Natural killer cell (primary cell): ENCODE measurements at regions of chr9 and their contacts with region 1.

Region 1: DNA sequence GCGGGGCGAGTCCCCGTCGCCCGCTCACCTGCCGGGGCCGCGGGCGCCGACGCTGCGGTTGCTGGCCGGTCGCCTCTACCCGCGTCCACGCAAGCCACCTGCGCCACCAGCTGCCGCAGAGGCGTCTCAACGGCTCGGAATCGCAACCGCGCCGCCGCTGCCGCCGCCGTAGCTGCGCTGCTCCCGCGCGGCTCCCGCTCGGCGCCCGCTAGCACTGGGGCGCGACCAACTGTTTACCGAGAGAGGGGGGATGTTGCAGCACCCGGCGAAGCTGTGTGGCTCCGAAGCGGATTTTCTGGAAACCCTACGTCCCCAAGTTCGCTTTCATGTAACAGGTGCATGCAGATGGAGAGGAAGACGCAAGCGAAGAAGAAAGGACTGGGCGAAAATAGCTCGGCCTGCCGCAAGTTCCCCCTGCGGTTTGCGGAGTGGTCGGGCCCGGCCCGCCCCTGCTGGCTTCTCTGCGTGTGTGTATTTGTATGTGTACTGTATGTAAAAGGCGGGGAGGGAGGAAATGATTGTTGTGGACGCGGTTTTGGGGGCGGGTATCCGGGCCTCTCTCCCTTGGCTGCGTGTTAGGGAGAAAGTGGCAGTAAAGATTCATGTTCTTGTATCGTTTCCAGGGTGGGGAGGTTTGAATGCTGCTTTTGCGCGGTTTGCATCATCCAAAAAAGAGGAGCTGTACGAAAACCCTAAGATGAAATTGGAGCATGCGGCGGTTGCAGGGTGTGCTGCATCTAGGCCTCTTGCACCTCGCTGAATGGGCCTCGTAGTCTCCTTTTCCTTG is at the start of gene PSIP1:
- DNase-seq: peak; percentile 87 to 93
- ATAC-seq: peak; percentile 81 to 92 (median 83)
- H3K4me3 ChIP-seq: peak within 1 kb of the TSS; percentile 92
- H3K4me3 Mint-ChIP-seq: peak within 1 kb of the TSS; percentile 98
- H3K27ac ChIP-seq: peak within 1 kb of the TSS; percentile 97
- H3K27ac Mint-ChIP-seq: peak within 1 kb of the TSS; percentile 98
- H3K4me1 ChIP-seq: peaks cover 7% of the 10 kb centered on the region
- H3K4me1 Mint-ChIP-seq: peaks cover 41% of the 10 kb centered on the region in 2 donors
- H3K27me3 ChIP-seq: no peaks in the 10 kb centered on the region
- H3K27me3 Mint-ChIP-seq: no peaks in the 10 kb centered on the region
- CTCF ChIP-seq: no peak
- total RNA-seq, gene PSIP1: 50.3 to 83.1 (median 72.6) TPM

Region 2: DNA sequence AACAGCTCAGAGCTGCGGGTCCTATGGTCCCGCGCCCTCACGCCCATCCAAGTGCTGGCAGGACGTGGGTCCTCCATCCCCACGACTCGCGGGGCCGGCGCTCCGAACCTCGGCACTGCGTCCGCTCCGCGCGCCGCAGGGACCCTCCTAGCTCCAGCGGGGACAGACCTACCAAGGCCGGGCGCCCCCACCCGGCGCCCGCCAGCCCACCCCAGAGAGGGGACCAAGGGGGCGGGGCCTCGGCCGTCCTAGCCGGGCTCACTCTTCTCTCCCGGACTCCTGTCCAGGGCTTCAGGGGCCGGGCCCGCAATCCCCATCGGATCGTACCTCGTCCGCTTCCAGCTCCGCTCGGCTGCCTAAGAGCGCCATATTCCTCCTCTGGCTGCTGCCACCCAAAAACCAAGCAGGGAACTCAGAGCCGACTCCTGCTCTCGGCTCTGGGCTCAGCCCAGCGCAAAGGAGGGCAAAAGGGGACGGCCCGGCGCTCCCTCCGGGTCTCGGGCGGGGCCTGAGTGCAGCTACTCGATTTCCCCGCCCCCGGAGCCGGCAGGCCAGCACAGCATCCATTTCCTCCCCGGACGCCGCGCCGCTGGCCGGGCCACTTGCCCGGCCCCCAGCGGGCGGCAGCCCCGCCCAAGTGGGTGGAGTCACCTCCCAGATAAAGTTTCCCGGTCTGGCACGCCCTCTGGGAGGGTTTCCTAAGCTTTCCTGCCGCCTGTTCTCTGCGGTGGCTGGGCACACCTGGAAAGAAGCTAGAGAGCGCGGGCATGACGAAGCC is 204.0 kb before region 1 on chr9 and contains the start of gene TTC39B:
- intact Hi-C with region 1: loop called (anchors 2 kb)
- DNase-seq: peak; percentile 81 to 87
- ATAC-seq: peak; percentile 89 to 96 (median 91)
- H3K4me3 ChIP-seq: peak within 1 kb of the TSS; percentile 98
- H3K4me3 Mint-ChIP-seq: peak within 1 kb of the TSS; percentile 97
- H3K27ac ChIP-seq: peak within 1 kb of the TSS; percentile 79
- H3K27ac Mint-ChIP-seq: peak within 1 kb of the TSS; percentile 85 to 95
- H3K4me1 ChIP-seq: peaks cover 16% of the 10 kb centered on the region
- H3K4me1 Mint-ChIP-seq: peaks cover 48 to 50% of the 10 kb centered on the region in 2 donors
- H3K27me3 ChIP-seq: no peaks in the 10 kb centered on the region
- H3K27me3 Mint-ChIP-seq: no peaks in the 10 kb centered on the region
- CTCF ChIP-seq: no peak
- total RNA-seq, gene TTC39B: 51.2 to 65.1 (median 54.2) TPM

Region 3: GRCh38 chr9:15422372-15423230 is 88.4 kb before region 1 on chr9 and contains the start of gene SNAPC3:
- intact Hi-C with region 1: loop called (anchors 1 kb)
- DNase-seq: peak; percentile 86 to 95
- ATAC-seq: peak; percentile 97 to 100 (median 98)
- H3K4me3 ChIP-seq: peak within 1 kb of the TSS; percentile 89
- H3K4me3 Mint-ChIP-seq: peak within 1 kb of the TSS; percentile 90
- H3K27ac ChIP-seq: peak within 1 kb of the TSS; percentile 69
- H3K27ac Mint-ChIP-seq: peak within 1 kb of the TSS; percentile 86 to 88
- H3K4me1 ChIP-seq: peaks cover 24% of the 10 kb centered on the region
- H3K4me1 Mint-ChIP-seq: peaks cover 32 to 41% of the 10 kb centered on the region in 2 donors
- H3K27me3 ChIP-seq: no peaks in the 10 kb centered on the region
- H3K27me3 Mint-ChIP-seq: no peaks in the 10 kb centered on the region
- CTCF ChIP-seq: no peak
- total RNA-seq, gene SNAPC3: 18.5 to 22.2 (median 19.2) TPM

Region 4: DNA sequence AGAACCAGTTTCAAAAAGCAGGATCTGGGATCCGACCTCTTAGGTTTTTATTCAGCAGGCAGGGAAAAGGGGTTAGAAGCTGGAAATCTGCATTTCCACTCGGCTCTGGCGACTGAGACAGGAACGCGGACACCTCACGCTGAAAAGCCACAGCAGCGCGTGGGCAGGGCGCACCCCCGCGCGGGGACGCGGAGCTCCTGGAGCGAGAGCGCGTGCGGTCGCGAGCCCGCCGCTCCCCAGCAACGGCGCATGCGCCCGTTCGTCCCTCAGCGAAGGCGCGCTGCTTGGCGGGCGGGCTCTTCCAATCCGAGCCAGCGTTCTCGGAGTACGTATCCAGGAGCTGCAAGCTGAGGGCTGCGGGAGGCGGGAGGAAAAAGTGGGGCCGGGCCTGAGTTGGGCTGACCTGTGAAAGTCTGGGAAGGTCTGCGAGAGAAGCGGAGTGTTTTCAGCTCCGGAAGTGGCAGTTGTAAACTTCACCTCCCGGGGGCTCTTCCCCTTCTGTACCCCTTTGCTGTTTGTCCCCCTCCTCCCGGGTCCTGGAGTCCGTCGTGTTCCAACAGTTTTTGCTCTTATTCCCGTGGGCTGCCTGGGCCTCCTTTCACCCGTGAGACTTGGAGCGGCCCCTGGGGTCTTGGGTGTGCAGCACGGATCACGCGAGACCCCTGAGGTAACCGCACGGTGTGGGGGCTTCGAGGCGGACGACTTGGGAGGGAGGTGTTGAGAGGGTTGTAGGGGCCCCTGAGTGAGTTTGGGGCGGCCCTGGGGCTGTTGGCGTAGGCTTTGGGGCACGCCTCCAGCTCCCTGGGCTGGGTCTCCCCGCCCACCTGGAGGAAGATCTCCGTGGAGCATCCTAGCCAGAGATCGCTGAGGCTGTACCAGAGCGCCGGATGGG is 41.9 kb after region 1 on chr9 and contains the start of gene CCDC171:
- intact Hi-C with region 1: loop called (anchors 1 kb)
- DNase-seq: peak; percentile 77 to 97
- ATAC-seq: peak; percentile 88 to 92 (median 91)
- H3K4me3 ChIP-seq: peak within 1 kb of the TSS; percentile 97
- H3K4me3 Mint-ChIP-seq: peak within 1 kb of the TSS; percentile 95
- H3K27ac ChIP-seq: peak within 1 kb of the TSS; percentile 19
- H3K27ac Mint-ChIP-seq: peak within 1 kb of the TSS; percentile 81 to 86
- H3K4me1 ChIP-seq: peaks cover 23% of the 10 kb centered on the region
- H3K4me1 Mint-ChIP-seq: peaks cover 19 to 26% of the 10 kb centered on the region in 2 donors
- H3K27me3 ChIP-seq: no peaks in the 10 kb centered on the region
- H3K27me3 Mint-ChIP-seq: no peaks in the 10 kb centered on the region
- CTCF ChIP-seq: no peak
- total RNA-seq, gene CCDC171: 1.5 to 2.6 (median 2.2) TPM